ENCODE measurements at regions of chr22 and their contacts with region 1.

Region 1: DNA sequence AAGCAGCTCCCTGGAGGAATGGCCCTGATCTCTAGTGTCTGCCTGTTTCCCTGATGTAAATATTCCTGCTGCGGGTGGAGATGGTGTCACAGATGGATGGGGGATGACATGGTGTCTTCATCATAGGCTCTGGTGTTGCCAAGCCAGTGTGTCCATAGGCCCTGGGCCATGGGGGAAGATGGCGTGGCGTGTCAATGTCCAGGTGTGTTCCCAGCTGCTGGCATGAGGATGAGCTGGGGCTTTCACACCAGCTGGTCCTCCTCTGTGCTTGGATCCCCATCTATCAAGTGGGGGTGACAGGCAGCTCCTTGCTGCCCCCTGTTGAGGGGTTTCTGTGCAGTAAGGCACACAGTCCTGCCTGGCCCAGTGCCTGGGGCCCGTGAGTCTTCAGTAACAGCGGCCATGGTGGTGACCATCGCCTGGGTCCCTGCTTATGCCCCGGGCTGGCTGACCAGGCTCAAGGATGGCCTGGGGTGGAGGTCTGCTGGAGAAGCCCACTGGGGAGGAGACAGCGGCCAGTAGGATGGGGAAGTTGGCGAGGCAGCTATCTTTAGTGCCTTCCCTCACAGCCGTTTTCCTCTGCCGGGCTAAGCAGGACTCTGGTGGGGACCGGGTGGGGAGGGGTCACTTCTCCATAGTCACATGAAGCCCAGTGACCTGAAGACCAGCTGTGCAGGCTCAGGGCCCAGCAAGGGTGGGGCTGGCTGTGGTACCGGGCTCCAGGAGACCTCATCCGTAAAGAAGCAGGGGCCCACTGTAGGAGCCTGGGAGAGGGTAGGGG is 12.7 kb downstream of the RPL3 start:
- DNase-seq: peak; percentile 77
- H3K4me3 ChIP-seq: no peak overlapping the region
- H3K27ac ChIP-seq: no peak overlapping the region
- H3K4me1 ChIP-seq: peaks cover 4 to 50% (median 33%) of the 10 kb centered on the region in 6 donors
- H3K27me3 ChIP-seq: no peaks in the 10 kb centered on the region
- CTCF ChIP-seq: peak in 7 of 11 experiments; percentile 12 to 68 (median 49)
- POLR2A ChIP-seq: no peak

Region 2: GRCh38 chr22:39253435-39254070 is 53.2 kb before region 1 on chr22:
- intact Hi-C with region 1: loop called (anchors 10 kb)
- DNase-seq: no peak
- H3K4me3 ChIP-seq: no peak overlapping the region
- H3K27ac ChIP-seq: no peak overlapping the region
- H3K4me1 ChIP-seq: peaks cover 14 to 35% (median 29%) of the 10 kb centered on the region in 6 donors
- H3K27me3 ChIP-seq: peaks cover 0 to 79% (median 21%) of the 10 kb centered on the region in 7 donors
- CTCF ChIP-seq: no peak
- POLR2A ChIP-seq: no peak